ENCODE measurements at regions of chr5 and their contacts with region 1.

Region 1: DNA sequence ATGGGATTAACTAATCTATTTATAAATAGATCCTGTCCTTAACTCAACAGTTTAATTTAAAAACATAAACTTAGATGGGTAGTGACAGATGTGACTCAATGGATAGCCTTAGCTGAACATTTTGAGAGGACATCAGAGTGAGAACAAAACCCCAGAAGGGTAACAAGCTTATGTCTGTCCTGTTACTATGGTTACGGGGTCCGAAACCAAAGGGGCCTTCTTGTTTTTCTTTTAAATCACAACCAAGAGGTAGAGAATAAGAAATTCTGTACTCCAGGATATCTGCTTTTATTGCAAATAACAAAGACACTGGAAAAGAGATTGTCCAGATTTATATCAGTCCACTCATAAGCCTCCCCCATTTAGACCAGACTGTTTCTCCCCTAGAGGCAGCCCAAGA is 612.1 kb downstream of the MTRR start:
- DNase-seq: no peak
- H3K4me3 ChIP-seq: no peak overlapping the region
- H3K27ac ChIP-seq: no peak overlapping the region
- H3K4me1 ChIP-seq: no peaks in the 10 kb centered on the region
- H3K27me3 ChIP-seq: no peaks in the 10 kb centered on the region
- CTCF ChIP-seq: no peak

Region 2: DNA sequence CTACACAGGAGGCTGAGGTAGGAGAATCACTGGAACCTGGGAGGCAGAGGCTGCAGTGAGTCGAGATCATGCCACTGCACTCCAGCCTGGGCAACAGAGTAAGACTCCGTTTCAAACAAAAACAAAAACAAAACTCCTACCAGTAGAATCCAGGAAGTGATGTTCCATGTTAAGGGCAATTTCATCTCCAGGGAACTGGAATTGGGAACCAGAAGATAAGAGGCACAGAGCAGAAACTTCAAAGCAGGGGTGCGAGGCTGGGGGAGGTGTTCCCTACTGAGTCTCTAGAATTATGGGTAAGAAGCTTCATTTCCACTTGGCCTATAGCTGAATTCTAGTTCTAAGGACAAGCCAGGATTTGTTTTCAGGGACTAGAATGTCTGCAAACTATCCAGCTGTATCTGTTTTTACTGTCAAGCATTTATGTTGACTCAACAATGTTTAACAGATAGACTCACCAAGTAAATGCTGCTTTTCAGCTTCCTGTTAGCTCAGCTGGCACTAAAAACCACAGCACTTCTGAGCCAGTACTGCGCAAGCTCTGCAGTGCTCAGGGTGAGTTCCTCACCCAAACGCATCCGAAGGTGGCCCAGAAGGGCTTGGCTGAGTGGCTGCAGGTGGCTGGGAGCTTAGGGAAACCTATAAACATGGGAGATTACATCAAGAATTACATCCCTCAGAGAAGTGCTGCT is 292.0 kb before region 1 on chr5:
- CTCF ChIA-PET with region 1: no interaction called
- POLR2A ChIA-PET with region 1: no interaction called
- intact Hi-C with region 1: no loop called
- DNase-seq: no peak
- H3K4me3 ChIP-seq: no peak overlapping the region
- H3K27ac ChIP-seq: no peak overlapping the region
- H3K4me1 ChIP-seq: no peaks in the 10 kb centered on the region
- H3K27me3 ChIP-seq: peaks cover 15% of the 10 kb centered on the region
- CTCF ChIP-seq: no peak

Region 3: GRCh38 chr5:8399471-8399870 is 81.5 kb before region 1 on chr5:
- CTCF ChIA-PET with region 1: no interaction called
- POLR2A ChIA-PET with region 1: interaction called, 10 read pairs
- intact Hi-C with region 1: no loop called
- DNase-seq: peak in 1 of 2 experiments; percentile 20
- H3K4me3 ChIP-seq: no peak overlapping the region
- H3K27ac ChIP-seq: no peak overlapping the region
- H3K4me1 ChIP-seq: no peaks in the 10 kb centered on the region
- H3K27me3 ChIP-seq: peaks cover 47% of the 10 kb centered on the region
- CTCF ChIP-seq: no peak

Region 4: GRCh38 chr5:8660133-8660893 is 179.3 kb after region 1 on chr5:
- CTCF ChIA-PET with region 1: no interaction called
- POLR2A ChIA-PET with region 1: no interaction called
- intact Hi-C with region 1: no loop called
- DNase-seq: no peak
- H3K4me3 ChIP-seq: no peak overlapping the region
- H3K27ac ChIP-seq: no peak overlapping the region
- H3K4me1 ChIP-seq: no peaks in the 10 kb centered on the region
- H3K27me3 ChIP-seq: peaks cover 5% of the 10 kb centered on the region; the same call in 1 of the 2 replicates
- CTCF ChIP-seq: no peak